Activated T-helper 1 cell treated with anti-CD3 and anti-CD28 coated beads, Interleukin-12 subunit alpha, Interleukin-12 subunit beta, Interleukin-2, Interleukin-4 antibody, amounts not matched to agents 30 ng/mL and 10 ng/mL and 1 ng/mL, durations not matched to agents 14 hours and 24 hours and 36 hours (primary cell): ENCODE measurements at regions of chr2 and their contacts with region 1.

Region 1: GRCh38 chr2:147910990-147911473 is 66.2 kb downstream of the ACVR2A start:
- DNase-seq: peak; percentile 4
- H3K4me3 Mint-ChIP-seq: no peak overlapping the region
- H3K27ac Mint-ChIP-seq: no peak overlapping the region
- H3K4me1 Mint-ChIP-seq: peaks cover 11% of the 10 kb centered on the region
- H3K27me3 Mint-ChIP-seq: peaks cover 2% of the 10 kb centered on the region

Region 2: GRCh38 chr2:146734042-146734820 is 1176.8 kb before region 1 on chr2:
- intact Hi-C with region 1: loop called (anchors 1 kb)
- DNase-seq: no peak
- H3K4me3 Mint-ChIP-seq: no peak overlapping the region
- H3K27ac Mint-ChIP-seq: no peak overlapping the region
- H3K4me1 Mint-ChIP-seq: no peaks in the 10 kb centered on the region
- H3K27me3 Mint-ChIP-seq: no peaks in the 10 kb centered on the region

Region 3: GRCh38 chr2:147045113-147045512 is 865.9 kb before region 1 on chr2:
- intact Hi-C with region 1: loop called (anchors 1 kb)
- DNase-seq: peak; percentile 5
- H3K4me3 Mint-ChIP-seq: no peak overlapping the region
- H3K27ac Mint-ChIP-seq: peak overlapping the region; percentile 7
- H3K4me1 Mint-ChIP-seq: no peaks in the 10 kb centered on the region
- H3K27me3 Mint-ChIP-seq: peaks cover 9% of the 10 kb centered on the region

Region 4: DNA sequence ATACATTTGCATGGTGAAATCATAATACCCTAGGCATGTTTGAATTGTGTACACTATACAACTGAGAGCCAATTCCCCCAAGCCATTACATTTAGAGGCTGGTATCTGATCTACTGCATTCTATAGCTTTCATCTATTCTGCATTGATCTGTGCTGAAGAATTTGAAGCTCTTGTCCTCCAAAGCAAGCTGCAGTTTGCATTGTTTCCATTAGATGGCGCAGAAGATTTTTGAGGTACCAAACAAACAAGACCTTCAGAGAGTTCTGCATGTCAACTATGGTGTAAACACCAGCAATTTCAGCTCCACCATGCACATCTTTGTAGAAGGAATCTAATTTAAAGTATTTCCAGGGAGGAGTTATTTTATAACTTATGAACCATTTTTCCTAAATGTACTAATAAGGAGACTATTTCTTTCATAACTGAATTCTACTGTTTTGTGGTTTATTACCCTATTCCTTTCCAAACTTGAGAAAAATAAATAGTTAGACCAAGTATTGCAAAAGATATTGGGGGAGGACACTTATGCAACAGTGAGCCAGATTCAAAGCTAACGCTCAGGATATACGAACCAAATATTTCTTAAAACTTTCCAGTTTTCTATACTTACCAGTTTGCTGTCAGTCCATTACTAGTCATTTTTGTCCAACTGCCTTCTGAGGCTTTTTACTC is 828.0 kb before region 1 on chr2:
- intact Hi-C with region 1: loop called (anchors 1 kb)
- DNase-seq: peak; percentile 49
- H3K4me3 Mint-ChIP-seq: no peak overlapping the region
- H3K27ac Mint-ChIP-seq: no peak overlapping the region
- H3K4me1 Mint-ChIP-seq: peaks cover 24% of the 10 kb centered on the region
- H3K27me3 Mint-ChIP-seq: peaks cover 5% of the 10 kb centered on the region

Region 5: DNA sequence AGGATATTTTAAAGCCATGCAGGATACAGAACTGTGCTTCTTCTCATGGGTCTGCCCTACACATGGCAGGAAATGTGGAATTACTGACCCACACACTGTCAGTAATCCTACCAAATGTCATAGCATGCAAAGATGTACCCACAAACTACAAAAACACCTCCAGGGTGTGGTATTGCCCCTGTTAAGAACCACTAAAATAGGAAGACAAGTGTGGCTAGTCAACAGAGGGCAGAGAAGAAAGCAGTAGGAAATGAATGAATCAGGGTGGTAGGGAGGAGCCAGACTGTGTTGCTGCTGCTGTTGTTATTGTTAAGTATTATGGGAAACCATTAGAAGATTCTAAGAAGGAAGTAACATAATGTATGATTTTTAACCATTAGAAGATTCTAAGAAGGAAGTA is 622.9 kb before region 1 on chr2:
- intact Hi-C with region 1: loop called (anchors 1 kb)
- DNase-seq: peak; percentile 37
- H3K4me3 Mint-ChIP-seq: peak overlapping the region; percentile 8
- H3K27ac Mint-ChIP-seq: peak overlapping the region; percentile 70
- H3K4me1 Mint-ChIP-seq: peaks cover 43% of the 10 kb centered on the region
- H3K27me3 Mint-ChIP-seq: no peaks in the 10 kb centered on the region

Region 6: DNA sequence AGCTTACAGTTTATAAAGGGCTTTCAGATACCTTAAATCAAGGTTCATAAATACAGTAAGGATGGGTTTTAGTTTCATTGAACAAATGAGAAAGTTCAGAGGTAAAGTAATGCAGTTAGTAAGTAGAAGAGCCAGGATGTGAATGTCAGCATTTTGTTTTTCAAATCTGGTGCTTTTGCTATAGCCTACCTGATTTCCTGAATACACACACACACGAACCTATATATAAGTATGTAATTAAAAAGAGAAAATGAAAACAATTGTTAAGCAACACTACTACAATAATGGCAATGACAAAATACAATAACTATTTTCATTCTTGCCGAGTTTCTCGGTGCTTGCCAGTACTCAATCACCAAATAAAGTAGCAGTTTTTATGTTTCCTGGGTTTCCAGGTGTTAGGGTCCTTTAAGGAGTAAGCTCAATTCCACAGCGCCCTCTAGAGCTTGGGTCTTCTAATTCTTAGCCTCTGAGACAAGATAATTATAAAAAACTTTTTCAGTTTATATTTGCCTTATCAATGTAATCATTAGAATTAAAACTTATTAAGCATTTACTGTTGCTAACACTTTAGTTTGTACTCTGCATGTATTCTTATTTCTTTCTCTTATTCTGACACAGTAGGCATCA is 579.1 kb before region 1 on chr2:
- intact Hi-C with region 1: loop called (anchors 2 kb)
- DNase-seq: peak; percentile 11
- H3K4me3 Mint-ChIP-seq: no peak overlapping the region
- H3K27ac Mint-ChIP-seq: no peak overlapping the region
- H3K4me1 Mint-ChIP-seq: peaks cover 33% of the 10 kb centered on the region
- H3K27me3 Mint-ChIP-seq: peaks cover 6% of the 10 kb centered on the region